Heart left ventricle (tissue), 16 donors: ENCODE measurements at regions of chr19 and their contacts with region 1.

Region 1: GRCh38 chr19:3360421-3361383 is 5.7 kb upstream of the NFIC start:
- DNase-seq: peak; percentile 76 to 90 (median 86)
- ATAC-seq: peak; percentile 55 to 80 (median 65)
- H3K4me3 ChIP-seq: peak overlapping the region; percentile 57 to 100 (median 97)
- H3K27ac ChIP-seq: peak overlapping the region; percentile 89 to 100 (median 98)
- H3K4me1 ChIP-seq: peaks cover 5 to 58% (median 34%) of the 10 kb centered on the region in 12 donors
- H3K27me3 ChIP-seq: peaks cover 0 to 3% (median 0%) of the 10 kb centered on the region in 9 donors
- CTCF ChIP-seq: peak in 7 of 12 donors; percentile 11 to 52 (median 37)
- POLR2A ChIP-seq: peak in 1 of 2 donors; percentile 67

Region 2: GRCh38 chr19:3336680-3337523 is 23.8 kb before region 1 on chr19:
- intact Hi-C with region 1: loop called in 1 of 10 experiments (anchors 2 kb)
- DNase-seq: peak; percentile 85 to 96 (median 89)
- ATAC-seq: peak; percentile 91 to 96 (median 95)
- H3K4me3 ChIP-seq: no peak overlapping the region
- H3K27ac ChIP-seq: peak overlapping the region; percentile 84 to 99 (median 92)
- H3K4me1 ChIP-seq: peaks cover 5 to 44% (median 33%) of the 10 kb centered on the region in 12 donors
- H3K27me3 ChIP-seq: no peaks in the 10 kb centered on the region
- CTCF ChIP-seq: no peak
- POLR2A ChIP-seq: no peak